HEK293 (cell line): ENCODE measurements at regions of chr17 and their contacts with region 1.

Region 1: GRCh38 chr17:4407851-4408250 is 25.9 kb upstream of the SPNS3 start:
- H3K4me3 ChIP-seq: no peak overlapping the region
- H3K27ac ChIP-seq: no peak overlapping the region
- H3K4me1 ChIP-seq: no peaks in the 10 kb centered on the region
- CTCF ChIP-seq: no peak

Region 2: GRCh38 chr17:4440690-4441686 is 33.1 kb after region 1 on chr17:
- CTCF ChIA-PET with region 1: interaction called, 3 read pairs
- POLR2A ChIA-PET with region 1: interaction called, 11 read pairs
- H3K4me3 ChIP-seq: no peak overlapping the region
- H3K27ac ChIP-seq: no peak overlapping the region
- H3K4me1 ChIP-seq: peaks cover 14% of the 10 kb centered on the region
- CTCF ChIP-seq: no peak